Cardiac septum (tissue), 1 donor: ENCODE measurements at regions of chr2 and their contacts with region 1.

Region 1: DNA sequence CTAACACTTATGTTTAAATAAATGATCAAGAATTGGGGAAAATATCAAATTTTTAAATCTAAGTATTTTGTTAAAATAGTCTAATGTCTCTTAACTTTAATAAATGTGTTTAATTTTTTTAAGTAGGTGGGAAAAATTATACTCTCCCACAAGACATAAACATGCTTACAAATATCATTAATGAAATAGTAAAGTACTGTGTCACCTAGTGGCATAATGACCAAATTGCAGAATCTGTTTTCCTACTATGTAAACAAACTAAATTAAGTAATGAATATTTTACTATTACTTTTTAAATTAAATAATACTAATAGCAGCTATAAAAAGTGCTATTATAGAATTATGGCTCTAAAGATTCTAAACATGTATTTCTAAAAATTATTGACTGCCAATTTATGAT is 52.0 kb upstream of the CHAC2 start:
- DNase-seq: no peak

Region 2: DNA sequence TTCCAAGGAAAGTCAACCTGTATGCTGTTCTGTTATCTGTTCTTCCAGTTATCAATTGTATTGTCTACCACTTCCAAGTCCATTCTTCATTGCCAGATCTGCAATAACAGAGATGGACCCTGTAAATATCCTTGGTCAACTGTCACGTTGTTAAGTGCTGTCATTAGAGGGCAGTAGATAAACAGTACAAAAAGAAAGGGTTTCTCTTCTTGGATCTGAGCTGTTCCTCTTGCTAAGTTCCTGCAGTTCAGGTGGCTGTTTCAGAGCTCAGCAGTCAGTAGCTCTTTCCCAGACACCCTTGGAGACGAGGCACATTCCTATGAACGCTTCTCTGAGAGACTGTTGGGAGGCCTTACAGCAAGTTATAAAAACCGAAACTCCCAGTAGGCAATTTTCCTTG is 905.1 kb before region 1 on chr2:
- intact Hi-C with region 1: loop called (anchors 5 kb)
- DNase-seq: no peak

Region 3: GRCh38 chr2:53373121-53373520 is 342.4 kb before region 1 on chr2:
- intact Hi-C with region 1: no loop called
- DNase-seq: no peak

Region 4: DNA sequence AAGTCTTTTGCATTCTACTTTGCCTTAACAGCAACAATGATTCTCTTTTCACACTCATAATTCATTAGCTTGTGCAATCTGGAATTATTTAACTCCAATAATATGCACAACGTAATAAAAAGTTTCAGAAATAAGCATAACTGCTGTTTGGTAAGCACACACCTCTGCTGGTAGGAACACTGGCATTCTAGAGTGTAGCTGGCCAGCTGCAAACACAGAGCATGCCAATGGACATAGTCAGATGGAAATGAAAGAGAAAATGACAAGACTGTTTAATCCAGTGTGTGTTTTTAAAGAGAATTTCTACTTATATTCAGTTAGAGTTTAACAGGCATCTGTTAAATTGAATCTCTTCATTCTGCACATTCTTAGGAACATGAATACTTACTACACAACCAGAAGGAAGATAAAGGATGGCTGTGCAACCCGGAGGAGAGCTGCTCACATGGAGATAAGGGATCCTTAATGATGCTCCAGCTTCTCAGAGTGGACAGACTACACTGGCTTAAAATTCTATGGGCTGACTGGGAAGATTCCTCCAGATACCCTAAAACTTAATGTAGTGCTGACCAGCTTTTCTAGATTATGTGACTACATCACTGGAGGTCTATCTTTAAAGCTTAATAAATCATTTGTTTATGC is 42.6 kb before region 1 on chr2:
- intact Hi-C with region 1: no loop called
- DNase-seq: no peak